ENCODE measurements at regions of chr7 and their contacts with region 1.

Region 1: GRCh38 chr7:116984917-116985316 is 31.6 kb downstream of the ST7 start:
- DNase-seq: no peak
- CTCF ChIP-seq: peak; percentile 63

Region 2: DNA sequence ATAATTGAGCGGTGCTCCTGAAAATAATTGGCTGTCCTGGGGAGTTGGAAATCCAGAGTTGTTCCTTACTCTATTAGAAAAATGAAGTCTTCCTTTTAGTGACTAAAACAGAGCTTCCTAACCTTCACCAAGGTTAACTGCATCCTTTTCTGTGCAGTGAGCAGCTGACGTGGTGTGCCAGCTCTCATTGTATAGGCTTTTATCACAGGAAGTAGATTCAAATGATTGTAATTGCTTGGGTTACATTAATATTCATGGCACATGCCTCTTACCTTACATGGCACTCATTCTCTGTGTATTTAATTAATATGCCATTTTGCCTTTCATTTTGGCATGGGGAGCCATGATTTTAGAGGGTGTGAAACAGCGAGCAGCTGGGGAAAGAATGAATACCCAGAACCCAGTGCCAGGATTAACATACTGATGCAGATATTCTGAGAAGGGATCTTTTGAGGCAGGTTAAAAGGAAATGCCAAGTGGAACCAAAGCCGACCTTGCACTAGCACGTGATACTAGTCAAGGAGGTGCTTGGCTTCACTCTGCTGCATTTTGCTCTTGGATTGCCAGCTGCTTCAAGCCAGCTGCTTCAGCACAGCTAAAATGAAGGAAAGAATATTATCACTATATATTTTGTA is 83.7 kb after region 1 on chr7:
- in situ Hi-C with region 1: no loop called
- DNase-seq: no peak
- CTCF ChIP-seq: no peak

Region 3: GRCh38 chr7:117119192-117119924 is 134.4 kb after region 1 on chr7:
- in situ Hi-C with region 1: loop called (anchors 5 kb)
- DNase-seq: no peak
- CTCF ChIP-seq: peak; percentile 75

Region 4: GRCh38 chr7:117659453-117660086 is 674.7 kb after region 1 on chr7:
- in situ Hi-C with region 1: no loop called
- DNase-seq: no peak
- CTCF ChIP-seq: no peak